CD8-positive, alpha-beta T cell (primary cell): ENCODE measurements at regions of chr16 and their contacts with region 1.

Region 1: DNA sequence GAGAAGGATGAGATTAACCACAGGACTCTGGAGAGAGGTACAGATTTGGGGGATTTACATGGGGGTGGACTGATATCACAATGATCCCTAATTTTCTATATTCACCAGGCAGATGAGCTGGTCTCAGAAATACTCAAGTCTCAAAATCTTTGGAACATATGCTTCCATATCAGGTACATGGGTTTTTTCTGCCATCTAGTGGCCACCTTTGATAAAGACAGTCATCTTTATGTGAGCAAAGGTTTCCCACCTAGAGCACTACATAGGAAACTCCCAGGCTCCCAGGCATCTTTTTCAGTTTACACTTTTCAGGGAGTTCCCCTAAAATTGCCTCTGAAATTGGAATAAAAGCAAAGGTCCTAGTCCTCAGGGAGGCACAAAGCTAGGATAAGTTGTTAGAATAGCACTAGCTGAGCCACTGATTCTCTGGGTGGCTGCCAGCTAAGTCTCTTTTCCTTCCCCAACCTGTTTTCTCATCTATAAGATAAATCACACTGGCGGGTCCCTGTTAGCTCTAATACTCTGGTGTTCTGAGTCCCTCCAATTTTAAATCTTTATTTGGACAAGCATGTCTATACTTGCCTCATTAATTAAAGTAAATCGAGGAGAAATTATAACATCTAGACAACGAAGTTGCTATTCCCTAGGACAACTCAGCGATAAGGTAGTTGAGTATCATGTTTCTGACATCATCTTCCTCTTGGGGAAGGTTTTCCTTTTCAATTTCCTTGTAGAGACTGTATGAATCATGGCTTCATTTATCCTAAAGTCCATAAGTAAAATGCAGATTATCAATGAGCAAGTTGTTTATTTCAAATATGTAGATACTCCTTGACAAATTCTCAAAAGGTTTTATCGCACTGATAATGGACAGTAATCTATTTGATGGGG is 19.0 kb upstream of the MON1B start:
- DNase-seq: peak in 4 of 9 experiments; percentile 12 to 68 (median 41)
- ATAC-seq: peak; percentile 64
- H3K4me3 ChIP-seq: no peak overlapping the region
- H3K4me3 Mint-ChIP-seq: no peak overlapping the region
- H3K27ac ChIP-seq: no peak overlapping the region
- H3K27ac Mint-ChIP-seq: no peak overlapping the region
- H3K4me1 ChIP-seq: no peaks in the 10 kb centered on the region
- H3K4me1 Mint-ChIP-seq: no peaks in the 10 kb centered on the region
- H3K27me3 ChIP-seq: peaks cover 0 to 4% of the 10 kb centered on the region in 2 experiments
- H3K27me3 Mint-ChIP-seq: peaks cover 48% of the 10 kb centered on the region
- CTCF ChIP-seq: peak; percentile 83

Region 2: DNA sequence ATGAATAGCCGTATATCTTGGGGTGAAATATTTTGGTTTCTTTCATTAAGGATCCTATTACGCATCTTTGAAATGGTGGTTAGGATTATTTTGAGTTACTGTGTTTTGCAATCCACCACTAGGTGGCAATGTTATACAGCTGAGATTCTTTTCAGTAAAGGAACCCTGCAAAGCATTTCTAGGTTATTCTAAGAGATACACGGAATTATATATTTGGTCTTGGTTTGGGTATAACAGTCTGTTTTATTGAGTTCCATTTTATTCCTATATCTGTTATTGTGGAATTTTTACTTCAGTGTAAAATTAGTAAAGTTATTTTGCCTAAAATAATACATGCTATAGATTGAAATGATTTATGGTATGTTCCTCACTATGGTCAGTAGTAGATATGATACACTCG is 1382.8 kb before region 1 on chr16:
- CTCF ChIA-PET with region 1: interaction called, 21 read pairs
- POLR2A ChIA-PET with region 1: no interaction called
- intact Hi-C with region 1: loop called in 1 of 2 experiments (anchors 1 kb)
- DNase-seq: peak in 2 of 9 experiments; percentile 47 to 63
- ATAC-seq: no peak
- H3K4me3 ChIP-seq: no peak overlapping the region
- H3K4me3 Mint-ChIP-seq: no peak overlapping the region
- H3K27ac ChIP-seq: no peak overlapping the region
- H3K27ac Mint-ChIP-seq: no peak overlapping the region
- H3K4me1 ChIP-seq: no peaks in the 10 kb centered on the region
- H3K4me1 Mint-ChIP-seq: no peaks in the 10 kb centered on the region
- H3K27me3 ChIP-seq: no peaks in the 10 kb centered on the region
- H3K27me3 Mint-ChIP-seq: peaks cover 21% of the 10 kb centered on the region
- CTCF ChIP-seq: peak; percentile 92

Region 3: DNA sequence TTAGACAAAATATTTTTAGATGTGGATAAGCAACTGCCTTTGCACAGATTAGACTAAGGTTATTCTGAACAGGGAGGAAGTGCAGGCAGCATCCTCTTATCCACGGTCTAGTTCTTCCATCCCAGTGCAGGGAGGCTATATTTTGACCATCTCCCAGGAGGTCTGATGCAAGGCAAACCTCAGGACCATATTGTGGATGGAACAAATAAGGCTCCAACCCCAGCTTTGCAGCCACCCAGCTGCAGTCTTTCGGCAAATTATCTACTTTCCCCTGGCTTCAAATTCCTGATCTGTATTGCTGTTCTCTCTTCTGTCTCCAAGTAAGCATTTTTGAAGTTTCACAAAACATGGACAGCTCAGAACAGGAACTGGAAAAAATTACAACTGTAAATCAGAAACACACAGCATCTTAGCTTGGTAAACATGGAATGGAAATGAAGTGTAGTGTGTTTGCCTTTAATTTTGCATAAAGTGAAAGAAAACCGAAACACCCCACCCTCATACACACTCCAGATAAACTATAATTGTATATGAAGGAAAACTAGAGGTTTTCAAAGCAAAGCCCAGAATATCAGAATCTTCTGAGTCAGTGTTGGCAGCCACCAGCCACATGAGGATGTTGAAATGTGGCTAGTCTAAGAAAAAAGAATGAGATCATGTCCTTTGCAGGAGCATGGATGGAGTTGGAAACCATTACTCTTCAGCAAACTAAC is 14.5 kb before region 1 on chr16:
- CTCF ChIA-PET with region 1: interaction called, 12 read pairs
- POLR2A ChIA-PET with region 1: no interaction called
- intact Hi-C with region 1: no loop called
- DNase-seq: no peak
- ATAC-seq: no peak
- H3K4me3 ChIP-seq: no peak overlapping the region
- H3K4me3 Mint-ChIP-seq: no peak overlapping the region
- H3K27ac ChIP-seq: no peak overlapping the region
- H3K27ac Mint-ChIP-seq: no peak overlapping the region
- H3K4me1 ChIP-seq: no peaks in the 10 kb centered on the region
- H3K4me1 Mint-ChIP-seq: no peaks in the 10 kb centered on the region
- H3K27me3 ChIP-seq: peaks cover 0 to 4% of the 10 kb centered on the region in 2 experiments
- H3K27me3 Mint-ChIP-seq: peaks cover 19% of the 10 kb centered on the region
- CTCF ChIP-seq: no peak